B cell (primary cell): ENCODE measurements at regions of chr11 and their contacts with region 1.

Region 1: GRCh38 chr11:65083834-65084597 is at the starts of genes CDCA5 and ZFPL1:
- DNase-seq: peak; percentile 98
- ATAC-seq: peak; percentile 87
- H3K4me3 ChIP-seq: peak within 1 kb of the TSS; percentile 61 to 81 (median 76)
- H3K4me3 Mint-ChIP-seq: peak within 1 kb of the TSS; percentile 98
- H3K27ac ChIP-seq: peak within 1 kb of the TSS; percentile 91 to 94
- H3K27ac Mint-ChIP-seq: peak within 1 kb of the TSS; percentile 100
- H3K4me1 ChIP-seq: peaks cover 12 to 19% of the 10 kb centered on the region in 2 donors
- H3K4me1 Mint-ChIP-seq: peaks cover 28% of the 10 kb centered on the region
- H3K27me3 ChIP-seq: no peaks in the 10 kb centered on the region
- H3K27me3 Mint-ChIP-seq: no peaks in the 10 kb centered on the region
- CTCF ChIP-seq: no peak
- total RNA-seq, gene CDCA5: 0.78 and 1.4 TPM in 2 replicates
- total RNA-seq, gene ZFPL1: 47.9 and 57.3 TPM in 2 replicates

Region 2: GRCh38 chr11:64916775-64917662 is 167.0 kb before region 1 on chr11 and contains the start of gene ATG2A:
- CTCF ChIA-PET with region 1: no interaction called
- POLR2A ChIA-PET with region 1: no interaction called
- intact Hi-C with region 1: loop called (anchors 1 kb)
- DNase-seq: peak; percentile 99
- ATAC-seq: peak; percentile 97
- H3K4me3 ChIP-seq: peak within 1 kb of the TSS; percentile 86 to 96 (median 90)
- H3K4me3 Mint-ChIP-seq: peak within 1 kb of the TSS; percentile 88
- H3K27ac ChIP-seq: peak within 1 kb of the TSS; percentile 44 to 84
- H3K27ac Mint-ChIP-seq: peak within 1 kb of the TSS; percentile 91
- H3K4me1 ChIP-seq: peaks cover 19 to 33% of the 10 kb centered on the region in 2 donors
- H3K4me1 Mint-ChIP-seq: peaks cover 34% of the 10 kb centered on the region
- H3K27me3 ChIP-seq: no peaks in the 10 kb centered on the region
- H3K27me3 Mint-ChIP-seq: no peaks in the 10 kb centered on the region
- CTCF ChIP-seq: no peak
- total RNA-seq, gene ATG2A: 38.6 and 43.4 TPM in 2 replicates

Region 3: GRCh38 chr11:65027213-65028067 is 56.6 kb before region 1 on chr11 and contains the start of gene SNX15:
- CTCF ChIA-PET with region 1: no interaction called
- POLR2A ChIA-PET with region 1: no interaction called
- intact Hi-C with region 1: loop called (anchors 1 kb)
- DNase-seq: peak; percentile 96
- ATAC-seq: peak; percentile 88
- H3K4me3 ChIP-seq: peak within 1 kb of the TSS; percentile 43 to 63 (median 53)
- H3K4me3 Mint-ChIP-seq: peak within 1 kb of the TSS; percentile 93
- H3K27ac ChIP-seq: peak within 1 kb of the TSS; percentile 55 to 73
- H3K27ac Mint-ChIP-seq: peak within 1 kb of the TSS; percentile 93
- H3K4me1 ChIP-seq: peaks cover 11 to 19% of the 10 kb centered on the region in 2 donors
- H3K4me1 Mint-ChIP-seq: peaks cover 17% of the 10 kb centered on the region
- H3K27me3 ChIP-seq: no peaks in the 10 kb centered on the region
- H3K27me3 Mint-ChIP-seq: no peaks in the 10 kb centered on the region
- CTCF ChIP-seq: peak; percentile 90
- total RNA-seq, gene SNX15: 28.5 and 30.4 TPM in 2 replicates

Region 4: GRCh38 chr11:65095974-65096806 is 12.2 kb after region 1 on chr11 and contains the start of gene VPS51:
- CTCF ChIA-PET with region 1: interaction called, 3 read pairs
- POLR2A ChIA-PET with region 1: no interaction called
- intact Hi-C with region 1: loop called (anchors 1 kb)
- DNase-seq: peak; percentile 93
- ATAC-seq: peak; percentile 86
- H3K4me3 ChIP-seq: peak within 1 kb of the TSS; percentile 69 to 90 (median 77)
- H3K4me3 Mint-ChIP-seq: peak within 1 kb of the TSS; percentile 96
- H3K27ac ChIP-seq: peak within 1 kb of the TSS; percentile 77 to 81
- H3K27ac Mint-ChIP-seq: peak within 1 kb of the TSS; percentile 97
- H3K4me1 ChIP-seq: peaks cover 10 to 16% of the 10 kb centered on the region in 2 donors
- H3K4me1 Mint-ChIP-seq: peaks cover 24% of the 10 kb centered on the region
- H3K27me3 ChIP-seq: no peaks in the 10 kb centered on the region
- H3K27me3 Mint-ChIP-seq: no peaks in the 10 kb centered on the region
- CTCF ChIP-seq: no peak
- total RNA-seq, gene VPS51: 223 and 225 TPM in 2 replicates

Region 5: GRCh38 chr11:65134386-65135253 is 50.6 kb after region 1 on chr11 and contains the start of gene SYVN1:
- CTCF ChIA-PET with region 1: no interaction called
- POLR2A ChIA-PET with region 1: no interaction called
- intact Hi-C with region 1: loop called (anchors 1 kb)
- DNase-seq: peak; percentile 97
- ATAC-seq: peak; percentile 64
- H3K4me3 ChIP-seq: peak within 1 kb of the TSS; percentile 81 to 99 (median 96)
- H3K4me3 Mint-ChIP-seq: peak within 1 kb of the TSS; percentile 97
- H3K27ac ChIP-seq: peak within 1 kb of the TSS; percentile 98 to 99
- H3K27ac Mint-ChIP-seq: peak within 1 kb of the TSS; percentile 99
- H3K4me1 ChIP-seq: peaks cover 36 to 57% of the 10 kb centered on the region in 2 donors
- H3K4me1 Mint-ChIP-seq: peaks cover 66% of the 10 kb centered on the region
- H3K27me3 ChIP-seq: no peaks in the 10 kb centered on the region
- H3K27me3 Mint-ChIP-seq: no peaks in the 10 kb centered on the region
- CTCF ChIP-seq: no peak
- total RNA-seq, gene SYVN1: 187 and 188 TPM in 2 replicates